H1 (cell line): ENCODE measurements at regions of chr19 and their contacts with region 1.

Region 1: DNA sequence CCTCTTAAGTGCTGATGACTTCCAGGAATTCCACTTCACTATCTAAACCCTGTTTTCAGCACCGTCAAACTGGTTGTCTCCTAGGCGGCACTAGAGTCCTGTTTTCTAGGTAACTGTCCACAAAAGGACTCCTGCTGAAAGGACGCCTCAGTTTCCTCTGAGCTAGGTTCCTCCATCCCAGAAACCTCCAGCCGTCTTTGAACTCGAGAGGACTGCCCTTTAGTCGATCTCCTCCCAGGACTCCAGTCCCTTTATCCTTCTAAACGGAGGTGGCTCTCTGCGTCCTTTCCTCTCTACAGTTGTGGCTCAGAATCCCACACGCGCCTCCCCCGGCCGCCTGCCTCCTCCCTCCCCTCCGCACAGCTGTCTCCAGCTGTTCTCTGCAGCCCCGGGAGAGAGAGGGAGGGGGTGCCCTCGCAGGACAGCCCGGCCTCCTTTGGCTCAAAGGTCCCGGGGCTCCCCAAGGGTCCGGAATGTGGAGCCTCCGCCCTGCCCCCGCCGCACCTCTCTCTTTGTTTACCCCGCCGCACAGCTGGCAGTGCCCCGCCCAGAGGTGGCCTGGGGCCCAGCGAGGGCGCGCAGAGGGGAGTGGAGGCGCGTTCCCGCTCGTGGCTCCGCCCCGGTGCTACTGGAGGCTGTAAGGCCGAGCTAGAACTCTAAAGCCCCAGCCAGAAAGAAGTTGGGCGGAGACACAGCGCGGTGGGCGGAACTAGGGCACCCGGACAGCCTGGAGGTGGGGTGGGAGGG is 2.4 kb downstream of the LTBP4 start:
- DNase-seq: peak in 1 of 2 experiments; percentile 97
- H3K4me3 ChIP-seq: peak overlapping the region; percentile 10 to 65 (median 17); a peak in 6 of 8 replicates
- H3K27ac ChIP-seq: no peak overlapping the region
- H3K4me1 ChIP-seq: peaks cover 9 to 43% (median 27%) of the 10 kb centered on the region in 4 experiments
- H3K27me3 ChIP-seq: peaks cover 13 to 57% (median 52%) of the 10 kb centered on the region in 4 experiments
- CTCF ChIP-seq: 0 out of 4 replicates have a peak, but pooled peaks of 1 of the 3 experiments have one; percentile 5
- EP300 ChIP-seq: peak in 1 of 2 experiments; percentile 73; a peak in 1 of 3 replicates
- POLR2A ChIP-seq: no peak
- RAD21 ChIP-seq: no peak; a peak in 1 of 4 replicates

Region 2: DNA sequence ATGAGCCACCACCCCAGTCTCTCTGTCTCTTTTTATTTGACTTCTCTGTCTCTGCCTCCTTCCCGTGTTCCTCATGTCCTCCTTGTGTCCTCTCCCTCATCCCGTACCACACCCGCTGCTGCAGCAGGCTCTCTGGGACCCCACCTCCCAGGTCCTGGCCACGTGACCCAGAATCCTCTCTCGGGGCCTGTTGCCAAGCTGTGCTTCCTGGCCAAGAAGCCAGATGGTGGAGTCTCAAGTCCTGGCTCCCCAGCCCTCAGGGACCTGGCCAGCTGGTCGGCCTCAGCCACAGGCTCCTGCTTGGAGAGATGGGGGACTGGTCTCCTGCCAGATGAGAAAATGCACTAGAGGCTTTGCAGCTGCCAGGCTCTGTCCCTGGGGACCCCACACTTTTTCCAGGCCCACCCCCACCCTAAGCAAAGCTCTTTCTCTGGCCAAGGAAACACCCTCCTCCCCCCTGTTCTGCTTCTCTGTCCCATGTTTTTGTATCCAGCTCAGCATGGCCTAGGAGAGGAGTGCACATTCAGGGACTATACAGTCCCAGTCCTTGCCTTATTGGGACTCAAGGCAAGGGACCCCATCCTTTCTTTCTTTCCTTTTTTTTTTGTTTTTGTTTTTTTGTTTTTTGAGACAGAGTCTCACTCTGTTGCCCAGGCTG is 61.2 kb before region 1 on chr19:
- CTCF ChIA-PET with region 1: interaction called, 21 read pairs
- POLR2A ChIA-PET with region 1: interaction called, 3 read pairs
- DNase-seq: no peak
- H3K4me3 ChIP-seq: no peak overlapping the region
- H3K27ac ChIP-seq: no peak overlapping the region
- H3K4me1 ChIP-seq: no peaks in the 10 kb centered on the region
- H3K27me3 ChIP-seq: no peaks in the 10 kb centered on the region
- CTCF ChIP-seq: no peak
- EP300 ChIP-seq: no peak
- POLR2A ChIP-seq: no peak
- RAD21 ChIP-seq: no peak

Region 3: DNA sequence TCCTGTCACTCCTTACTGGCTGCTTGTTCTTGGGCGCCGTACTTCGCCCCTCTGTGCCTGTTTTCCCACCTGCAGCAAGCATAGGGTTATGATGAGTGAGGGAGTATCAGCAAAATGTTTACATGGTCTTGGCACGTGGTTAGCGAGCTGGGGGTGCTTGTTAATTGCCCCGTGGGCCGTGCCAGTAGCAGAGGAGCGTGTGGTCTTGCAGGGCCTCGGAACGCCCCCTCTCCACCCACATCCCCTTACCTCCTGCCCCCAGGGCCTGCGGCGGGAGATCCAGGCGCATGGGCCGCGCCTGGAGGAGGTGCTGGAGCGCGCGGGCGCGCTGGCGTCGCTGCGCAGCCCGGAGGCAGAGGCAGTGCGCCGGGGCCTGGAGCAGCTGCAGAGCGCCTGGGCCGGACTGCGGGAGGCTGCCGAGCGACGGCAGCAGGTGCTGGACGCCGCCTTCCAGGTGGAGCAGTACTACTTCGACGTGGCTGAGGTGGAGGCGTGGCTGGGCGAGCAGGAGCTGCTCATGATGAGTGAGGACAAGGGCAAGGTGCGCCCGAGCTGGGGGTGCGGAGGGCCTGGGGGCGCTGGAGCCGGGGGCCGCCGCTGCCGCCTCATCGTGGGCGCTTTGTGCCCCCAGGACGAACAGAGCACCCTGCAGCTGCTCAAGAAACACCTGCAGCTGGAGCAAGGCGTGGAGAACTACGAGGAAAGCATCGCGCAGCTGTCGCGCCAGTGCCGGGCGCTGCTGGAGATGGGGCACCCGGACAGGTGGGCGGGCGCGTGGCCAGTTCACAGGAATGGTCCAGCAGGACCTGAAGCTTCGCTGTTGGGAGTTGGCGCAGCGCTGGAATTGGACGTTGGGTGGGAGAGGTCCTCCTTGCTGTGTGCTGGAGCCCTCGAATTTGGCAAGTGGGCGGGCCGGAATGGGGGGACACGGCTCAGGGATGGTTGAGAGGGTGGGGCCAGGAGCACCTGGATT is 49.4 kb before region 1 on chr19:
- CTCF ChIA-PET with region 1: interaction called, 35 read pairs
- POLR2A ChIA-PET with region 1: interaction called, 4 read pairs
- DNase-seq: peak in 1 of 2 experiments; percentile 76
- H3K4me3 ChIP-seq: peak overlapping the region in 1 of 4 experiments; percentile 49; a peak in 3 of 8 replicates
- H3K27ac ChIP-seq: no peak overlapping the region
- H3K4me1 ChIP-seq: peaks cover 0 to 5% (median 2%) of the 10 kb centered on the region in 4 experiments; a peak in 4 of 7 replicates
- H3K27me3 ChIP-seq: peaks cover 7 to 40% (median 36%) of the 10 kb centered on the region in 4 experiments
- CTCF ChIP-seq: peak in 1 of 3 experiments; percentile 32; a peak in 2 of 4 replicates
- EP300 ChIP-seq: no peak
- POLR2A ChIP-seq: no peak
- RAD21 ChIP-seq: peak in 1 of 2 experiments; percentile 26; a peak in 2 of 4 replicates

Region 4: DNA sequence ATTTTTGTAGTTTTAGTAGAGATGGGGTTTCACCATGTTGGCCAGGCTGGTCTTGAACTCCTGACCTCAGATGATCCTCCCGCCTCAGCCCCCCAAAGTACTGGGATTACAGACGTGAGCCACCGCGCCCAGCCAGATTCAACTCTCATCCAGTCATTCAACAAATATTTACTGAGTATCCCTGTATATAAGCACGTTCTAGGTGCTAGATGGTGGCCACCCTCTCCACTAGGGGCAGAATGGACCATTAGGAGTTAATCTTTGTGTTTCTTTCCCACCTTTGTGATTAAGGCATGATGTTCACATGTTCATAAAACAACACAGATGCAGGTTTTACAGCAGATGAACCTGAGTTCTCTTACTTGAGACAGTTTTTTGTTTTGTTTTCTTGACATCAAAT is 19.6 kb before region 1 on chr19:
- CTCF ChIA-PET with region 1: interaction called, 12 read pairs
- POLR2A ChIA-PET with region 1: interaction called, 4 read pairs
- DNase-seq: no peak
- H3K4me3 ChIP-seq: no peak overlapping the region
- H3K27ac ChIP-seq: no peak overlapping the region
- H3K4me1 ChIP-seq: no peaks in the 10 kb centered on the region
- H3K27me3 ChIP-seq: no peaks in the 10 kb centered on the region
- CTCF ChIP-seq: peak in 2 of 3 experiments; percentile 38 to 59; a peak in 2 of 4 replicates
- EP300 ChIP-seq: no peak
- POLR2A ChIP-seq: no peak
- RAD21 ChIP-seq: peak in 1 of 2 experiments; percentile 37; a peak in 2 of 4 replicates

Region 5: GRCh38 chr19:40614622-40615411 is 11.3 kb after region 1 on chr19:
- CTCF ChIA-PET with region 1: interaction called, 18 read pairs
- POLR2A ChIA-PET with region 1: interaction called, 30 read pairs
- DNase-seq: peak in 1 of 2 experiments; percentile 93
- H3K4me3 ChIP-seq: peak overlapping the region; percentile 71 to 94 (median 86)
- H3K27ac ChIP-seq: 0 out of 2 replicates have a peak overlapping the region, but pooled peaks have one; percentile 35
- H3K4me1 ChIP-seq: peaks cover 3 to 13% (median 7%) of the 10 kb centered on the region in 4 experiments; a peak in 6 of 7 replicates
- H3K27me3 ChIP-seq: peaks cover 2 to 26% (median 25%) of the 10 kb centered on the region in 4 experiments
- CTCF ChIP-seq: no peak
- EP300 ChIP-seq: no peak
- POLR2A ChIP-seq: no peak
- RAD21 ChIP-seq: no peak

Region 6: DNA sequence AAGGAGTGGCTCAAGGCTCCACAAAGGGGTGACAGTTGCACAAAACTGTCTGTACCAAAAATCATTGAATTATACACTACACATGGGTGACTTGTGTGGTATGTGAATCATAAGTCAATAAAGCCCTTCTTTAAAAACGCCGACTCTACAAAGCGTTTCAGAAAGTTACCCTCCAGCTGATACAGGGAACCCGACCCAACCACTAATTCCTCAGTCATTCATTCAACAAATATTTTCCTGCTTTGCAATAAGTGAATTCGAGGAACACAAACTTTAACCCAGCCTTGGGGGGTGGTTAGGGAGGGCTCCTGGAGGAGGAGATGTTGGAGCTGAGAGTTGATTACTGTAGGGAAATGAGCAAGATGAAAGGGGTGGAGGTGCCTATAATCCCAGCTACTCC is 29.6 kb after region 1 on chr19:
- CTCF ChIA-PET with region 1: interaction called, 100 read pairs
- POLR2A ChIA-PET with region 1: interaction called, 7 read pairs
- DNase-seq: no peak
- H3K4me3 ChIP-seq: no peak overlapping the region
- H3K27ac ChIP-seq: no peak overlapping the region
- H3K4me1 ChIP-seq: peaks cover 0 to 9% (median 4%) of the 10 kb centered on the region in 4 experiments; a peak in 5 of 7 replicates
- H3K27me3 ChIP-seq: peaks cover 0 to 13% (median 8%) of the 10 kb centered on the region in 4 experiments; a peak in 3 of 7 replicates
- CTCF ChIP-seq: no peak
- EP300 ChIP-seq: no peak
- POLR2A ChIP-seq: no peak
- RAD21 ChIP-seq: no peak

Region 7: GRCh38 chr19:40646564-40647254 is 43.1 kb after region 1 on chr19:
- CTCF ChIA-PET with region 1: no interaction called
- POLR2A ChIA-PET with region 1: no interaction called
- DNase-seq: no peak
- H3K4me3 ChIP-seq: no peak overlapping the region
- H3K27ac ChIP-seq: no peak overlapping the region
- H3K4me1 ChIP-seq: no peaks in the 10 kb centered on the region
- H3K27me3 ChIP-seq: no peaks in the 10 kb centered on the region; a peak in 1 of 7 replicates
- CTCF ChIP-seq: no peak
- EP300 ChIP-seq: no peak
- POLR2A ChIP-seq: no peak
- RAD21 ChIP-seq: no peak

Region 8: GRCh38 chr19:40740747-40741146 is 137.2 kb after region 1 on chr19:
- CTCF ChIA-PET with region 1: no interaction called
- POLR2A ChIA-PET with region 1: no interaction called
- DNase-seq: no peak
- H3K4me3 ChIP-seq: no peak overlapping the region
- H3K27ac ChIP-seq: no peak overlapping the region
- H3K4me1 ChIP-seq: peaks cover 0 to 13% (median 3%) of the 10 kb centered on the region in 4 experiments; a peak in 4 of 7 replicates
- H3K27me3 ChIP-seq: no peaks in the 10 kb centered on the region
- CTCF ChIP-seq: no peak
- EP300 ChIP-seq: no peak
- POLR2A ChIP-seq: no peak
- RAD21 ChIP-seq: no peak